PC-9 (cell line): ENCODE measurements at regions of chr1 and their contacts with region 1.

Region 1: DNA sequence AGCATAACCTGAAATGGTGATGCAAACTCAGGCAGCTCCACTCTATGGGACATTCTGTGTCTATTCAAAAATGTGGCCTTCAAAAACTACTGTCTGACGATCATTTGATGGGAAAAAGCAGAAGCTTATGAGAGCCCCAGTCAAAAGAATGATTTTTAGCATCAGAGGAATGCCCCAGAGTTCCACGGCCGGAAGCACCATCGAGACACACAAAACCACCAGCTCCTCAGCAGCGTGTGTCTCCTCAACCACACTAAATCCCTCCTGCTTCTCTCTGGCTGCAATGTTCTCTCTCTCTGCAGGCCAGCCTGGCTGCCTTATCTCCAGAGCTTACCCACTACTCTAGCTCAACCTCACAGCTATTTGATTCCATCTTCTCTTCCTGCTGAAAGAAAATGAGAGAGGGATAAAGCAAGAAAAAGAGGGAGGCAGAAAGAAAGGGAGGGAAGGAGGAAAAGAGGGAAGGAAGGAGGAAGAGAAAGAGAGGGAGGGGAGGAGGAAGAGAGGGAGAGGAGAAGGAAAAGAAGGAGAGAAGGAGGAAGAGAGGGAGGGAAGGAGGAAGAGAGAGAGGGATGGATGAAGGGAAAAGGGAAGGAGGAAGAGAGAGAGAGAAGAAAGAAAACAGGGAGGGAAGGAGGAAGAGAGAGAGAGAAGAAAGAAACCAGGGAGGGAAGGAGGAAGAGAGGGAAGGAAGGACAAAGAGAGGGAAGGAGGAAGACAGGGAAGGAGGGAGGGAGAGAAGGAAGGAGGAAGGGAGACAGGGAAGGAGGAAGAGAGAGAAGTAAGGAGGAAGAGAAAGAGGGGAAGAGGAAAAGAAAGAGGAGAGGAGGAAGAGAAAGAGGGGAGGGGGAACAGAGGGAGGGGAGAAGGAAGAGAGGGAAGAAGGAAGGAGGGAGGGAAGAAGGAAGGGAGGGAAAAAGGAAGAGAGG is 33.5 kb upstream of the LAPTM5 start:
- DNase-seq: no peak
- H3K4me3 ChIP-seq: no peak overlapping the region
- H3K27ac ChIP-seq: no peak overlapping the region
- H3K4me1 ChIP-seq: no peaks in the 10 kb centered on the region
- H3K27me3 ChIP-seq: no peaks in the 10 kb centered on the region
- CTCF ChIP-seq: no peak

Region 2: GRCh38 chr1:30778154-30778978 is 12.7 kb before region 1 on chr1:
- CTCF ChIA-PET with region 1: no interaction called
- POLR2A ChIA-PET with region 1: no interaction called
- intact Hi-C with region 1: no loop called
- DNase-seq: peak; percentile 51 to 65
- H3K4me3 ChIP-seq: no peak overlapping the region
- H3K27ac ChIP-seq: no peak overlapping the region
- H3K4me1 ChIP-seq: peaks cover 10% of the 10 kb centered on the region; the same call in 1 of the 2 replicates
- H3K27me3 ChIP-seq: no peaks in the 10 kb centered on the region
- CTCF ChIP-seq: no peak

Region 3: DNA sequence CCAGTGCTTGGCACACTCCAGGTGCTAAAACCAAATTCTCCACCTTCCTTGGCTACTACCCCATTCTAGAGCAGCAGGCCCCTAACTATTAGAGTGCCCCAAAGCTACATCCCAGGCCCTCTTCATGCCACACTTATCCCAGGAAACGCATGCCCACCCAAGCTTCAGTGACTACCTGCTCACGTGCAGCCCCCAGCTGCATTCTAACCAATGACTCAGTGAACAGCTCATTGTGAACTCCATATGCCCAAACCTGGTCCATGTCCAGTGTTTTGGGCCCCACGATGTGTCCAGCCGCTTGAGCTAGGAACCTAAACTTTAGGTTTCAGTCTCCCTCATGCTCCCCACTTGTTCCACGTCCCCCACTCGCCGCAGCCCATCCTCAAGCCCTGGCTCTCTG is 407.0 kb after region 1 on chr1:
- CTCF ChIA-PET with region 1: interaction called, 12 read pairs
- POLR2A ChIA-PET with region 1: no interaction called
- intact Hi-C with region 1: no loop called
- DNase-seq: no peak
- H3K4me3 ChIP-seq: no peak overlapping the region
- H3K27ac ChIP-seq: no peak overlapping the region
- H3K4me1 ChIP-seq: no peaks in the 10 kb centered on the region
- H3K27me3 ChIP-seq: no peaks in the 10 kb centered on the region
- CTCF ChIP-seq: no peak